Breast epithelium (tissue), 4 donors: ENCODE measurements at regions of chr10 and their contacts with region 1.

Region 1: DNA sequence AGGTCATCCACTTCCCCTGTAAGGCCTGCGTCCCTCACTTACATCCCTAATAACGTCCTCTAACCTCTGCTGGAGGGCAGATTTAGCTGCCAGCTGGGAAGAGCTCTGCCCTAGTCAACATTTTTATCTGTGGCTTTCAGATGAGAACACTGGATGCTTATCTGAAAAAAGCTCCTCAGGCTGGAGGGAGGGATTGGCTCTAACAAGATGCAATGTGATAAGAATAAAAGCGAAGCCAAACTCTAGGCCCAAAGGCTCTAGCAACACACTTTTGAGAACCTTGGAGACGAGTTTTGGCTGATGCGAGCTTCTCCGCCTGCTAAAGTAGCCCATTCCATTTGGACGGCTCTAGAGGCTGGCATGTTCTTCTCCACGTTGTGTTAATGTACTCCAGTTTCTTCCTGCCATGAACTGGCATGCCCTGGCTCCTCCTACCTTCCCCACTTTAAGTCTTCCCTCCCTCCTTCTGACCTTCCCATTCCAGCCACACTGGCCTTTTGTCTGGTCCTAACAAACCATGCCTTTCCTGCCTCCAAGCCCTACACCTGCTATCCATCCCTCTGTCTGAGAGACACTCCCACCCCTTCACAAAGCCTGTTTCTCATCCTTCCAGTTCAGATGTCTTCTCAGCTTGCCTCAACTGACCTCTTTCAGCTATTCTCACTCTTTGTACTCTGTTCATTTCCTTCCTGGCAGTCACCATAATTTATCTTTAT is 62.5 kb upstream of the ATRNL1 start:
- DNase-seq: no peak
- H3K4me3 ChIP-seq: no peak overlapping the region
- H3K27ac ChIP-seq: no peak overlapping the region
- H3K4me1 ChIP-seq: no peaks in the 10 kb centered on the region
- H3K27me3 ChIP-seq: no peaks in the 10 kb centered on the region
- CTCF ChIP-seq: no peak
- POLR2A ChIP-seq: no peak

Region 2: DNA sequence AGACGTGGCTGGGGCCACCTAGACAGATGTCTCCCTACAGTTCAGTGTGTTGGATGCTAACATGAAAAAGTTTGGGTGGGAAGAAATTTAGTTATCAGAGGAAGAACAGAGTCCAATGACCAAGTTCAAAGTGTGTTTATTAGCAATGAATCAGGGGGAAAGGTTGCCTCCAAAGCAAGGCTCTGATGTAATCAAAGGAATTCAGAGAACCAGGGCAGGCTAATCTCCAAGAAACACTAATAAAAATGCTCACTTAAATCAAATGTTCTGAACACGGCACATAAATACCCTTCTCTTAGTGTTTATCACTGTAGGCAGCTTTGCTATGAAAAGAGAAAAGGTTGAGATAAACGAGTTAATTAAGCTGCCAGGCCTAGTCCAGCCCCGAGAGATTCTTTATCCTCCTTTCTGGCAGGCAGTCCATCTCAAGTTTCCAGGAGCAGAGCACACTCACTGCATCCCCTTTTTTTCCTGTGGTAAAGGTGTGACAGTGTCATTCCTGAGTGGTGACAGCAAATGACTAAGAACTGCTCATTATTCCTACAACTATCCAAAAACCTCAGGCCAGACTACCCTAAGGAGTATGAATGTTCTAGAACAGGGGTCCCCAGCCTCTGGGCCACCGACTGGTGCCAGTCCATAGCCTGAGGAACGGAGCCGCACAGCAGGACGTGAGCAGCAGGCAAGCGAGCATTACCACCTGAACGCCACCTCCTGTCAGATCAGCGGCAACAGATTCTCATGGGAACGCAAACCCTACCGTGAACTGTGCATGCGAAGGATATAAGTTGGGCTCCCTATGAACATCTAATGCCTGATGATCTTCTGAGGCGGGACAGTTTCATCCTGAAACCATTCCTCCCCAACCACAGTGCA is 276.0 kb before region 1 on chr10:
- intact Hi-C with region 1: loop called (anchors 5 kb)
- DNase-seq: no peak
- H3K4me3 ChIP-seq: no peak overlapping the region
- H3K27ac ChIP-seq: peak overlapping the region; percentile 73 to 74
- H3K4me1 ChIP-seq: no peaks in the 10 kb centered on the region
- H3K27me3 ChIP-seq: no peaks in the 10 kb centered on the region
- CTCF ChIP-seq: no peak
- POLR2A ChIP-seq: no peak